Activated B cell treated with CpG ODN at 0.5 μM for 24 hours (primary cell): ENCODE measurements at regions of chr11 and their contacts with region 1.

Region 1: GRCh38 chr11:66069715-66070603 is at the start of gene PACS1:
- DNase-seq: peak; percentile 82
- ATAC-seq: peak; percentile 75
- H3K4me3 Mint-ChIP-seq: peak within 1 kb of the TSS; percentile 92
- H3K27ac Mint-ChIP-seq: peak within 1 kb of the TSS; percentile 95
- H3K4me1 Mint-ChIP-seq: peaks cover 66% of the 10 kb centered on the region
- H3K27me3 Mint-ChIP-seq: no peaks in the 10 kb centered on the region
- CTCF ChIP-seq: no peak
- total RNA-seq, gene PACS1: 118 and 121 TPM in 2 replicates

Region 2: GRCh38 chr11:65225279-65226102 is 844.5 kb before region 1 on chr11:
- CTCF ChIA-PET with region 1: no interaction called
- POLR2A ChIA-PET with region 1: no interaction called
- intact Hi-C with region 1: no loop called
- DNase-seq: peak; percentile 49
- ATAC-seq: peak; percentile 89
- H3K4me3 Mint-ChIP-seq: peak overlapping the region; percentile 83
- H3K27ac Mint-ChIP-seq: peak overlapping the region; percentile 24
- H3K4me1 Mint-ChIP-seq: peaks cover 17% of the 10 kb centered on the region
- H3K27me3 Mint-ChIP-seq: no peaks in the 10 kb centered on the region
- CTCF ChIP-seq: no peak

Region 3: GRCh38 chr11:65961232-65961901 is 108.6 kb before region 1 on chr11 and contains the start of gene SART1:
- CTCF ChIA-PET with region 1: no interaction called
- POLR2A ChIA-PET with region 1: no interaction called
- intact Hi-C with region 1: no loop called
- DNase-seq: peak; percentile 85
- ATAC-seq: peak; percentile 89
- H3K4me3 Mint-ChIP-seq: peak within 1 kb of the TSS; percentile 97
- H3K27ac Mint-ChIP-seq: peak within 1 kb of the TSS; percentile 95
- H3K4me1 Mint-ChIP-seq: peaks cover 50% of the 10 kb centered on the region
- H3K27me3 Mint-ChIP-seq: no peaks in the 10 kb centered on the region
- CTCF ChIP-seq: no peak
- total RNA-seq, gene SART1: 86.6 and 92.3 TPM in 2 replicates

Region 4: DNA sequence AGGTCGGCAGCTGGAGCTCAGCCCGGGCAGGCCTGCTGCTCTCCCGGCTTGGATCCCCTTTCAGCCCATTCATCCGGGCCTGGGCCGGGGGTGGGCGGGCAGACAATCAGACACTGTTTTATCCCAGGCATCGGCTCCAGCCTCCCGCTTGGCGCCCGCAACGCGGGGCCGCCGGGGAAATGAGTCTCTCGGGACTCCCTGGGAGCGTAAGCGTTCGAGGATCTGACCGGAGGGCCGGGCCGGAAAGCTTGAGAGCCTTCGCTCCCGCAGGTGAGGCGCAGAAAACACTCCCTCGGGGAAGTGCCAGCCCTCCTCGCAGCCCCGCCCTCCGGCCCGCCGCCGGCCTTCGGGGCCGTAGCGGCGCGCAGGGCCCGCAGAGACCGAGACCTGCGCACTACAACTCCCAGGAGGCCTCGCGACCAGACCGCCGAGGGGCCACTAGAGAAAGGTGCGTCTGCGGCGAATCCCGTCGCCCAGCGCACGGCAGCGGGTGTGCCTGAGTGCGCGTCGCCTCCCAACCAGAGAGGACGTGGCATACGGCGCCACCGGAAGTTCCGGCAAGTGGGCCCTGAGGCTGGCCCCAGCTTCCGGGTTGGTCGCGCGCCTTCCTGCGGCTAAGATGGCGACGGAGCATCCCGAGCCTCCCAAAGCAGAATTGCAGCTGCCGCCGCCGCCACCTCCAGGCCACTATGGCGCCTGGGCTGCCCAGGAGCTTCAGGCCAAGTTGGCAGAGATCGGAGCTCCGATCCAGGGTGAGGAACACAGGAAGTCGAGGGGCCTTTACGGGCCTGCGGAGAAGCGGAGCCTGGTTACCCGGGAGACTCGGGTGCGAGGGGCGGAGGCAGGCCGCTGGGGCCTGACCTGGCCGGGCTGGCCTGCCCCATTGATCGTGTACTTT is 17.9 kb before region 1 on chr11 and contains the start of gene SF3B2:
- CTCF ChIA-PET with region 1: interaction called, 15 read pairs
- POLR2A ChIA-PET with region 1: interaction called, 46 read pairs
- intact Hi-C with region 1: loop called (anchors 1 kb)
- DNase-seq: peak; percentile 91
- ATAC-seq: peak; percentile 97
- H3K4me3 Mint-ChIP-seq: peak within 1 kb of the TSS; percentile 99
- H3K27ac Mint-ChIP-seq: peak within 1 kb of the TSS; percentile 96
- H3K4me1 Mint-ChIP-seq: peaks cover 27% of the 10 kb centered on the region
- H3K27me3 Mint-ChIP-seq: peaks cover 8% of the 10 kb centered on the region
- CTCF ChIP-seq: no peak
- total RNA-seq, gene SF3B2: 198 and 219 TPM in 2 replicates

Region 5: DNA sequence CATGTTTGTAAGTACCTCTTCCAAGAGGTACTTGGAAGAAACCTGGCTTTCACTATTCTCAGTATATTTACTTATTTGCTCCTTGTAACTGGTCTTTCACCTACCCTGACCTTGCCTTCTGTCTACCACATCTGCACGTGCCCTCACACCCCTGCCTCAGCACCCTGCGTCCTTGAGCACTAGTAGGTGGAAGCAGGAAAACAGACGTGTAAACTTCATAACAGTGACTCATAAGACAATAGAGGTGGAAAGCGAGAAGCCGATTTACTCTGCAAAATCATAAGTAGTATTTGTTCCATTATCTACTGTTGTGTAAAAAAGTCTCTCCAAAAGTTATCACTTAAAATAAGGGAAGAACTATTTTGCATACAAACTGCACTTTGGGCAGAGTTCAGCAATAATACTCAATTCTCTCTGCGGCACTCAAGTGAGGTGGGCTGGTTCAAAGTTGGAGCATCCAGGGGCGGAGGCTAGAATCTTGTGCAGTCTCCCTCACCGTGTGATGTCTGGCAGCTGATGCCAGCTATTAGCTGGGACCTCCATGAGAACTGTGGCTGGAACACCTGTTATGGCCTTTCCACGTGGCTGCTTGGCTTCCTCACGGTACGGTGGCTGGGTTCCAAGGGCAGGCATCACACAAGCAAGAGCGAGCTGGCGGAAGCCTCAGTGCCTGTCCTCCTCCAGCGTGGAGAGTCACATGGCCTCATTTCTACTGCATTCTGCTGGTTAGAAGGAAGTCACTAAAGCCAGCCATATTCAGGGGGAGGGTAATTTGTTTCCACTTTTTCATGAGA is 30.5 kb after region 1 on chr11:
- CTCF ChIA-PET with region 1: no interaction called
- POLR2A ChIA-PET with region 1: interaction called, 6 read pairs
- intact Hi-C with region 1: loop called (anchors 2 kb)
- DNase-seq: peak; percentile 41
- ATAC-seq: peak; percentile 89
- H3K4me3 Mint-ChIP-seq: peak overlapping the region; percentile 70
- H3K27ac Mint-ChIP-seq: peak overlapping the region; percentile 88
- H3K4me1 Mint-ChIP-seq: peaks cover 62% of the 10 kb centered on the region
- H3K27me3 Mint-ChIP-seq: no peaks in the 10 kb centered on the region
- CTCF ChIP-seq: no peak

Region 6: GRCh38 chr11:66119348-66120133 is 49.6 kb after region 1 on chr11:
- CTCF ChIA-PET with region 1: interaction called, 14 read pairs
- POLR2A ChIA-PET with region 1: interaction called, 11 read pairs
- intact Hi-C with region 1: no loop called
- DNase-seq: no peak
- ATAC-seq: no peak
- H3K4me3 Mint-ChIP-seq: no peak overlapping the region
- H3K27ac Mint-ChIP-seq: peak overlapping the region; percentile 39
- H3K4me1 Mint-ChIP-seq: peaks cover 87% of the 10 kb centered on the region
- H3K27me3 Mint-ChIP-seq: no peaks in the 10 kb centered on the region
- CTCF ChIP-seq: no peak

Region 7: GRCh38 chr11:66136752-66137123 is 66.8 kb after region 1 on chr11:
- CTCF ChIA-PET with region 1: interaction called, 59 read pairs
- POLR2A ChIA-PET with region 1: interaction called, 10 read pairs
- intact Hi-C with region 1: loop called (anchors 1 kb)
- DNase-seq: no peak
- ATAC-seq: no peak
- H3K4me3 Mint-ChIP-seq: no peak overlapping the region
- H3K27ac Mint-ChIP-seq: peak overlapping the region; percentile 47
- H3K4me1 Mint-ChIP-seq: peaks cover 84% of the 10 kb centered on the region
- H3K27me3 Mint-ChIP-seq: no peaks in the 10 kb centered on the region
- CTCF ChIP-seq: no peak

Region 8: DNA sequence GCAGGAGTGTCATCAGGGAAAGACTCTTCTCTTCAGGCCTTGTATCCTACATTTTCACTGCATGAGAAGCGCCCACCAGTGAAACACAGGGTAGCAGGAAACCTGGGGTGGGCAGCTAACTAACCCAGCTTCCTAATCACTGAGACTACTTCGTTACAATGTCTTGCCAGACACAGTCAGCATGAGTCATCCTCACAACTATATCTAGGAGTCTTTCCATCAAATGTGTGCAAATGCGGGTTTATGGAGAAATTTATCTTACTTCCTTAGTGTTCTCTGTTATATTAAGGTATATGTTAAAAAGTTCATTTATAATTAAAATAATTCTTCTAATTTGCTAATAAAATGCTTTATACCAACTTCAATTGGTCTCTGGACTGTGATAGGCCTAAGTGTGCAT is 118.6 kb after region 1 on chr11:
- CTCF ChIA-PET with region 1: no interaction called
- POLR2A ChIA-PET with region 1: no interaction called
- intact Hi-C with region 1: no loop called
- DNase-seq: no peak
- ATAC-seq: no peak
- H3K4me3 Mint-ChIP-seq: no peak overlapping the region
- H3K27ac Mint-ChIP-seq: no peak overlapping the region
- H3K4me1 Mint-ChIP-seq: peaks cover 25% of the 10 kb centered on the region
- H3K27me3 Mint-ChIP-seq: no peaks in the 10 kb centered on the region
- CTCF ChIP-seq: no peak

Region 9: GRCh38 chr11:66258473-66258893 is 188.5 kb after region 1 on chr11:
- CTCF ChIA-PET with region 1: no interaction called
- POLR2A ChIA-PET with region 1: no interaction called
- intact Hi-C with region 1: loop called (anchors 1 kb)
- DNase-seq: no peak
- ATAC-seq: no peak
- H3K4me3 Mint-ChIP-seq: peak overlapping the region; percentile 96
- H3K27ac Mint-ChIP-seq: peak overlapping the region; percentile 96
- H3K4me1 Mint-ChIP-seq: peaks cover 23% of the 10 kb centered on the region
- H3K27me3 Mint-ChIP-seq: no peaks in the 10 kb centered on the region
- CTCF ChIP-seq: no peak